ENCODE measurements at regions of chr2 and their contacts with region 1.

Region 1: DNA sequence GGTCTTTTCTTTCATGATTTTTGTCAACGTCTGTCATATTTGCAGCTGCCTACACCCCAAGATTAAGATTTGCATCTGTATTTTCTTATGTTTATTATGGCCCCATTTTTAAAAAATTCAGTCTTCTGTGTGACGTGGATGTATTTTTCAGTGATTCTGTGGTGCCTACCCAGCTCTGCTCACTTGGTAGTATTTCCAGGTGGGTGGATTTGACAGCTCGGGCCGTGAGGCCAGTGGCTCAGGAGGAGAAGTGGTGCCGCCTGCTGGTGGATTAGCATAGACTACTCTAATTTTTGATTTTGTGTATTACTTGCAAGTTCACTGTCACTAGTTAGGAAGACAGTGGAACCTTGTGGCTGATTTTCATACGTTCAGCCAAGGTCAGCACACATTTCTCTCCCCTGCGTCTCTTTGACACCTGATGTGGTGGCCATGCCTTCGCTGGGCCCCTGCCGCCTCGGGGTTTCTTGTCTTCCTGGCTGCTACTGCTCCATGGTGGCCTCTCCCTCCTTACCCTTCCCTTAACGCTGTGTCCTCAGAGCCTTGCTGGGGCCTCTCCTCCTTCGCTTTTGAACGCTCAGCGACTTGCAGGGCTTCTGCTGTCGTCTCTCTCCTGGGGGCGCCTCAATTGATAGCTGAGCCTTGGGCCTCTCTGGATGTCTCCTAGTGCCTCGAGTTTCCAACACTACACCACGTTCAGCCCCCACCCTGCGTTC is 89.3 kb downstream of the DGKD start:
- DNase-seq: peak; percentile 69 to 89 (median 87)
- ATAC-seq: peak; percentile 99
- H3K4me3 ChIP-seq: no peak overlapping the region
- H3K4me3 Mint-ChIP-seq: no peak overlapping the region
- H3K27ac ChIP-seq: no peak overlapping the region
- H3K27ac Mint-ChIP-seq: peak overlapping the region; percentile 69
- H3K4me1 ChIP-seq: peaks cover 14% of the 10 kb centered on the region
- H3K4me1 Mint-ChIP-seq: peaks cover 34% of the 10 kb centered on the region
- H3K27me3 ChIP-seq: no peaks in the 10 kb centered on the region
- H3K27me3 Mint-ChIP-seq: no peaks in the 10 kb centered on the region
- CTCF ChIP-seq: peak; percentile 87

Region 2: GRCh38 chr2:232854082-232854481 is 589.5 kb before region 1 on chr2:
- CTCF ChIA-PET with region 1: no interaction called
- POLR2A ChIA-PET with region 1: no interaction called
- intact Hi-C with region 1: loop called in 1 of 2 experiments (anchors 1 kb)
- DNase-seq: no peak
- ATAC-seq: no peak
- H3K4me3 ChIP-seq: no peak overlapping the region
- H3K4me3 Mint-ChIP-seq: no peak overlapping the region
- H3K27ac ChIP-seq: no peak overlapping the region
- H3K27ac Mint-ChIP-seq: peak overlapping the region; percentile 69
- H3K4me1 ChIP-seq: no peaks in the 10 kb centered on the region
- H3K4me1 Mint-ChIP-seq: no peaks in the 10 kb centered on the region
- H3K27me3 ChIP-seq: no peaks in the 10 kb centered on the region
- H3K27me3 Mint-ChIP-seq: no peaks in the 10 kb centered on the region
- CTCF ChIP-seq: no peak

Region 3: GRCh38 chr2:233331536-233331935 is 112.1 kb before region 1 on chr2:
- CTCF ChIA-PET with region 1: no interaction called
- POLR2A ChIA-PET with region 1: no interaction called
- intact Hi-C with region 1: no loop called
- DNase-seq: peak; percentile 61 to 96 (median 83)
- ATAC-seq: peak; percentile 92
- H3K4me3 ChIP-seq: peak overlapping the region; percentile 2 to 5
- H3K4me3 Mint-ChIP-seq: peak overlapping the region; percentile 29
- H3K27ac ChIP-seq: peak overlapping the region; percentile 66 to 89
- H3K27ac Mint-ChIP-seq: peak overlapping the region; percentile 96
- H3K4me1 ChIP-seq: peaks cover 53% of the 10 kb centered on the region
- H3K4me1 Mint-ChIP-seq: peaks cover 48% of the 10 kb centered on the region
- H3K27me3 ChIP-seq: no peaks in the 10 kb centered on the region
- H3K27me3 Mint-ChIP-seq: no peaks in the 10 kb centered on the region
- CTCF ChIP-seq: no peak

Region 4: GRCh38 chr2:233346930-233347329 is 96.7 kb before region 1 on chr2:
- CTCF ChIA-PET with region 1: interaction called, 14 read pairs
- POLR2A ChIA-PET with region 1: interaction called, 5 read pairs
- intact Hi-C with region 1: no loop called
- DNase-seq: no peak
- ATAC-seq: no peak
- H3K4me3 ChIP-seq: no peak overlapping the region
- H3K4me3 Mint-ChIP-seq: no peak overlapping the region
- H3K27ac ChIP-seq: no peak overlapping the region
- H3K27ac Mint-ChIP-seq: no peak overlapping the region
- H3K4me1 ChIP-seq: peaks cover 6% of the 10 kb centered on the region
- H3K4me1 Mint-ChIP-seq: peaks cover 21% of the 10 kb centered on the region
- H3K27me3 ChIP-seq: no peaks in the 10 kb centered on the region
- H3K27me3 Mint-ChIP-seq: no peaks in the 10 kb centered on the region
- CTCF ChIP-seq: no peak

Region 5: DNA sequence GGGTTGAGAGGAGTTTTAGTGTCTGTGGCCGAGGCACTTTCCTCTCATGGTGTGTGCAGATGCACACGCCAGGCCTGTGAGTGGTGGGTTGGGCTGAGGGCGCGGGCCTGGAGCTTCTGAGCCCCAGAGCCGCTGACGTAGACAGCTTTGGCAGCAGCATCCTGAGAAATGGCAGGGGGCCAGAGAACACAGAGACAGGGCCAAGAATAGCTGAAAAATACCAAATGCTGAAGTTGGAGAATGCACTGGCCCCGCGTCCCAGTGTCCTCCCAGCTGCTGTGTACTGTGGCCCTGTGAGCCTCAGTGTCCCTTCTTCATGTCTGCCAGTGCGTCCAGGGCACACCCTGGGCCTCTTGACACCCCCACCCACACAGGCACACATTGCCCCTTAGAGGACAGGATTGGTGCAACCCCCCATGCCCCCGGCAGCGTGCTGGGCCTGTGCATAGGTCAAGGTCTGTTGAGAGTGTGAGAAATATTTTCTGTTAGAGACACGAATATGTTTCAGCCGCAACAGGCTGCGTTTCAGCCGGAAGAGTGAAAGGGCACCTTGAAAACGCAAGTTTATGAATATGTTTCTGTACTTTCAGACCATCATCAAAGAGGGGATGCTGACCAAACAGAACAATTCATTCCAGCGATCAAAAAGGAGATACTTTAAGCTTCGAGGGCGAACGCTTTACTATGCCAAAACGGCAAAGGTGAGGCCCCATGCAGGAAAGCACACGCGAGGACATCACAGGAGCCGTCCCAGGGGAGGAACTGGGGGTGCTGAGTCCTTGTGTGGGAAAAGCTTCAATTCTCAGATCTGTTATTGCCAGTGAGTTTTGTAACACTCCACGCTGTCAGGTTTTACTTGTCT is 55.7 kb before region 1 on chr2:
- CTCF ChIA-PET with region 1: interaction called, 847 read pairs
- POLR2A ChIA-PET with region 1: interaction called, 4 read pairs
- intact Hi-C with region 1: no loop called
- DNase-seq: peak in 4 of 9 experiments; percentile 34 to 71 (median 52)
- ATAC-seq: peak; percentile 41
- H3K4me3 ChIP-seq: no peak overlapping the region
- H3K4me3 Mint-ChIP-seq: peak overlapping the region; percentile 75
- H3K27ac ChIP-seq: peak overlapping the region in 1 of 2 experiments; percentile 78
- H3K27ac Mint-ChIP-seq: peak overlapping the region; percentile 96
- H3K4me1 ChIP-seq: peaks cover 68% of the 10 kb centered on the region
- H3K4me1 Mint-ChIP-seq: peaks cover 75% of the 10 kb centered on the region
- H3K27me3 ChIP-seq: no peaks in the 10 kb centered on the region
- H3K27me3 Mint-ChIP-seq: no peaks in the 10 kb centered on the region
- CTCF ChIP-seq: no peak

Region 6: GRCh38 chr2:233413559-233414272 is 29.9 kb before region 1 on chr2:
- CTCF ChIA-PET with region 1: interaction called, 847 read pairs
- POLR2A ChIA-PET with region 1: interaction called, 5 read pairs
- intact Hi-C with region 1: loop called in 1 of 2 experiments (anchors 1 kb)
- DNase-seq: peak; percentile 21 to 84 (median 74)
- ATAC-seq: peak; percentile 58
- H3K4me3 ChIP-seq: no peak overlapping the region
- H3K4me3 Mint-ChIP-seq: peak overlapping the region; percentile 51
- H3K27ac ChIP-seq: peak overlapping the region; percentile 25 to 37
- H3K27ac Mint-ChIP-seq: peak overlapping the region; percentile 87
- H3K4me1 ChIP-seq: peaks cover 85% of the 10 kb centered on the region
- H3K4me1 Mint-ChIP-seq: peaks cover 93% of the 10 kb centered on the region
- H3K27me3 ChIP-seq: no peaks in the 10 kb centered on the region
- H3K27me3 Mint-ChIP-seq: no peaks in the 10 kb centered on the region
- CTCF ChIP-seq: no peak

Region 7: DNA sequence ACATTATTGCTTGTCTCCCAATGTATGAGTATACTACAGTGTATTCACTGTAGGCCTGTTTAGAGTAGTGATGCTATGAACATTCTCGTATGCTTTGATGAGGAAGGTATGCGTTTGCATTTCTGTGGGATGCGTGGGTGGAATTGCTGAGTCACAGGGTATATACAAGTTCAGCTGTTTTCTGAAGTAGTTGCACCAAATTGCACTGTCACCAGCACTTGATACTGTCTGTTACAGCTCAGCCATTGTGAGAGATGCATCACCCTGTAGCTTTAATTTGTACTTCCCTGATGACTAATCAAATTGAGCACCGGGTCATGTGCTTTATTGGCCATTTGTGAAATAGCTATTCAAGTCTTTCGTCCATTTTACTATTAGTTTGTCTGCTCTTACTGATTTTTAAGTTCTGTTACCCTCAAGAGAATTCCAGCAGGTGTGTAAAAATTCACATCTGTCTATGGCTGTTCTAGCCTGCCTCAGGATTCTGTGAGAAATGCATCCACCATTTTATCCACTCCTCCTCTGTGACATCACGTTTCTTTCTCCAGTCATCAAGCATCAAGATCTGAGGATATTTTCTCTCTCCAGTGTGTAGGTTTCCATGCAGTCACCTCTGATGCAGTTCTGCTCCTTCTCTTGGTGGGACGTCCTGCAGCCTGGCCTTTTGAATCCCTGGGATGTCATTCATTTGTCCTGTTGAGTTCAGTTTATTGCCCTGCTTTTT is 16.8 kb before region 1 on chr2:
- CTCF ChIA-PET with region 1: interaction called, 81 read pairs
- POLR2A ChIA-PET with region 1: interaction called, 6 read pairs
- intact Hi-C with region 1: loop called in 1 of 2 experiments (anchors 2 kb)
- DNase-seq: peak in 1 of 9 experiments; percentile 21
- ATAC-seq: no peak
- H3K4me3 ChIP-seq: no peak overlapping the region
- H3K4me3 Mint-ChIP-seq: no peak overlapping the region
- H3K27ac ChIP-seq: no peak overlapping the region
- H3K27ac Mint-ChIP-seq: no peak overlapping the region
- H3K4me1 ChIP-seq: peaks cover 80% of the 10 kb centered on the region
- H3K4me1 Mint-ChIP-seq: peaks cover 89% of the 10 kb centered on the region
- H3K27me3 ChIP-seq: no peaks in the 10 kb centered on the region
- H3K27me3 Mint-ChIP-seq: no peaks in the 10 kb centered on the region
- CTCF ChIP-seq: no peak